Heart left ventricle (tissue), 16 donors: ENCODE measurements at regions of chr16 and their contacts with region 1.

Region 1: GRCh38 chr16:10181196-10182162 is 749 bp downstream of the GRIN2A start:
- DNase-seq: peak; percentile 44 to 76 (median 54)
- ATAC-seq: peak; percentile 56 to 95 (median 88)
- H3K4me3 ChIP-seq: peak overlapping the region in 11 of 12 donors; percentile 17 to 47 (median 30)
- H3K27ac ChIP-seq: no peak overlapping the region
- H3K4me1 ChIP-seq: peaks cover 0 to 28% (median 16%) of the 10 kb centered on the region in 12 donors
- H3K27me3 ChIP-seq: peaks cover 24 to 81% (median 53%) of the 10 kb centered on the region in 9 donors
- CTCF ChIP-seq: peak; percentile 79 to 98 (median 90)
- POLR2A ChIP-seq: no peak

Region 2: GRCh38 chr16:8567750-8568617 is 1613.5 kb before region 1 on chr16:
- intact Hi-C with region 1: loop called in 3 of 10 experiments (anchors 5 to 10 kb)
- DNase-seq: peak; percentile 53 to 74 (median 65)
- ATAC-seq: peak in 3 of 4 donors; percentile 77 to 88 (median 84)
- H3K4me3 ChIP-seq: no peak overlapping the region
- H3K27ac ChIP-seq: no peak overlapping the region
- H3K4me1 ChIP-seq: peaks cover 0 to 12% (median 0%) of the 10 kb centered on the region in 12 donors
- H3K27me3 ChIP-seq: peaks cover 0 to 7% (median 0%) of the 10 kb centered on the region in 9 donors
- CTCF ChIP-seq: peak; percentile 92 to 98 (median 97)
- POLR2A ChIP-seq: no peak

Region 3: DNA sequence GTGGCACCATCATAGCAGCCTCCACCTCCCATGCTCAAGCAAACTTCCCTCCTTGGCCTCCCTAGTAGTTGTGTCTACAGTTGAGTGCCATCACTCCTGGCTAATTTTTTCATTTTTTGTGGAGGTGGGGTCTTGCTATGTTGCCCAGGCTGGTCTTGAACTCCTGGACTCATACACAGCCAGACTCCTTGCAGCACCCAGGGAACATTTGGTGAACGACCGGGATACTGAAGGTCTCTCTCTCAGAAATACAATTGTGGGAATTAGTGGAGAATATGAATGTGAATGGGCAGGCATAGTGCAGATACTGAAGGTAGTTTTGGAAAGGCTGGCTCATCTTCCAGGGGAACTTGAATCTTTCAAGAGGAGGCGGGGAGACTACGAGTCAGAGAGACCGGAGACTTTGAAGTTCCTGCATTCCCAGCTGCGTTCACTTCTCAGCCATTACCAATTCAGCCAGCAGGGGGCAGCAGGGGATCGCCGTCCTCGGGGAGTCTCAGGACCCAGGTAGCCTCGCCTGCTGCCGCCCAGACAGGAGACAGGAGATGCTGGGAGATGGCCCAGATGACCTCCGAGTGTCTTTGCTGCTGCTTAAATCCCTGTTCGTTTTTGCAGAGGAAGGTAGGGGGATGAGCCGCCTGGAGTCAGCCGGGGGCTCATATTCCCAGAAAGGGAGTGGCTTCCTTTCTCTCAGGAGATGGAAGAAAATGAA is 1021.5 kb before region 1 on chr16:
- intact Hi-C with region 1: loop called in 8 of 10 experiments (anchors 5 to 10 kb)
- DNase-seq: peak in 1 of 5 donors; percentile 40
- ATAC-seq: peak in 3 of 4 donors; percentile 49 to 80 (median 65)
- H3K4me3 ChIP-seq: no peak overlapping the region
- H3K27ac ChIP-seq: no peak overlapping the region
- H3K4me1 ChIP-seq: peaks cover 0 to 4% (median 0%) of the 10 kb centered on the region in 12 donors
- H3K27me3 ChIP-seq: peaks cover 0 to 13% (median 0%) of the 10 kb centered on the region in 9 donors
- CTCF ChIP-seq: peak; percentile 37 to 78 (median 62)
- POLR2A ChIP-seq: no peak

Region 4: GRCh38 chr16:9297437-9298113 is 883.9 kb before region 1 on chr16:
- intact Hi-C with region 1: loop called in 1 of 10 experiments (anchors 5 kb)
- DNase-seq: peak in 4 of 5 donors; percentile 16 to 61 (median 32)
- ATAC-seq: no peak
- H3K4me3 ChIP-seq: no peak overlapping the region
- H3K27ac ChIP-seq: no peak overlapping the region
- H3K4me1 ChIP-seq: no peaks in the 10 kb centered on the region
- H3K27me3 ChIP-seq: peaks cover 0 to 4% (median 0%) of the 10 kb centered on the region in 9 donors
- CTCF ChIP-seq: peak; percentile 35 to 63 (median 50)
- POLR2A ChIP-seq: no peak

Region 5: DNA sequence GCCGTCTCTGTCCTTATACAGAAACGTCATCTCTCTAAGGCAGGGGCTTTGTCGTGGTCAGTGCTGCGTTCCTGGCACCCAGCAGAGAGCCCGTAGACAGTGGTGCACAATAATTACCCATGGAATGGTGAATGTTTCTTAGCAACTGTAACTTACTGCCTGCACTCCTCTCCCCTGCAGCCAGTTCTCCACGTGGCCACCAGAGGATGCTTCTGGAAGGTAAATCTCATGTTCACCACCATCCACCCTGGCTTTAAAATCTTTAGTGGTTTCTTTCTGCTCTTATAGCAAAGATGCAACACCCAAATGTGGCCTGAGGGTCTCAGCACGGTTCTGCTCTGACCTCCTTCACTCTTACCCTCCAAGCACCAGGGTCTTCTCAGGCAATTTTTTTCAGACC is 150.0 kb before region 1 on chr16:
- intact Hi-C with region 1: loop called in 2 of 10 experiments (anchors 5 kb)
- DNase-seq: no peak
- ATAC-seq: no peak
- H3K4me3 ChIP-seq: no peak overlapping the region
- H3K27ac ChIP-seq: no peak overlapping the region
- H3K4me1 ChIP-seq: no peaks in the 10 kb centered on the region
- H3K27me3 ChIP-seq: no peaks in the 10 kb centered on the region
- CTCF ChIP-seq: peak in 3 of 12 donors; percentile 10 to 21 (median 11)
- POLR2A ChIP-seq: no peak

Region 6: DNA sequence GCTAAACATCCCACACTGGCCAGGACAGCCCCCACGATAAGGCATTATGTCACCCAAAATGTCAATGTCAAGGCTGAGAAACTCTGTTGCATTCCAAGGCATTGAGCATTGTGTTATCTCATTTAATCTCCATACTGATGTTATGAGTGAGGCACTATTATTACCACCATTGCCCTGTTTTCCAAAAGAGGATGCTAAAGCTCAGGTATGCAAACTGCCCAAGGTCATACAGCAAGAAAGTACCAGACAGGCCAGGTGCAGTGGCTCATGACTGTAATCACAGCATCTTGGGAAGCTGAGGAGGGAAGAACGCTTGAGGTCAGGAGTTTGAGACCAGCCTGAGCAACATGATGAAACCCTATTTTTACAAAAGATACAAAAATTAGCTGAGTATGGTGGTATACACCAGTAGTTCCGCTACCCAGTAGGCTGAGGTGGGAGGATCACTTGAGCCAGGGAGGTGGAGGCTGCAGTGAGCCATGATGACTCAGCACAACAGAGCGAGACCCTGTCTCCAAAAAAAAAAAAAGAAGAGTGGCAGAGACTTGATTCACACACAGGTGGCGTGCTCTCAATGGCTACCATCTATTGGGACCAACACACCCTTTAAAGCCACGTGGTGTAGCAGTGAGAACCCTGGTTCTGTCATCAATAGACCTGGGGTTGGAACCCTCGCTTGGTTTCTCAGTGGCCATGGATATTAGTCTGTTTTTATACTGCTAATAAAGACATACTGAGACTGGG is 59.6 kb after region 1 on chr16:
- intact Hi-C with region 1: no loop called
- DNase-seq: no peak
- ATAC-seq: no peak
- H3K4me3 ChIP-seq: no peak overlapping the region
- H3K27ac ChIP-seq: no peak overlapping the region
- H3K4me1 ChIP-seq: no peaks in the 10 kb centered on the region
- H3K27me3 ChIP-seq: peaks cover 0 to 29% (median 0%) of the 10 kb centered on the region in 9 donors
- CTCF ChIP-seq: no peak
- POLR2A ChIP-seq: no peak